H1 (cell line): ENCODE measurements at regions of chr6 and their contacts with region 1.

Region 1: GRCh38 chr6:150004783-150005717 is 20.3 kb downstream of the RAET1L start:
- DNase-seq: peak; percentile 83 to 95
- H3K4me3 ChIP-seq: peak overlapping the region; percentile 69 to 76 (median 72)
- H3K27ac ChIP-seq: no peak overlapping the region; the same call in 1 of the 2 replicates
- H3K4me1 ChIP-seq: peaks cover 0 to 9% (median 4%) of the 10 kb centered on the region in 4 experiments; a peak in 4 of 7 replicates
- H3K27me3 ChIP-seq: peaks cover 16 to 42% (median 34%) of the 10 kb centered on the region in 4 experiments
- CTCF ChIP-seq: 0 out of 4 replicates have a peak, but pooled peaks of 1 of the 3 experiments have one; percentile 4
- EP300 ChIP-seq: no peak
- POLR2A ChIP-seq: peak in 1 of 2 experiments; percentile 82; a peak in 2 of 3 replicates
- RAD21 ChIP-seq: no peak

Region 2: DNA sequence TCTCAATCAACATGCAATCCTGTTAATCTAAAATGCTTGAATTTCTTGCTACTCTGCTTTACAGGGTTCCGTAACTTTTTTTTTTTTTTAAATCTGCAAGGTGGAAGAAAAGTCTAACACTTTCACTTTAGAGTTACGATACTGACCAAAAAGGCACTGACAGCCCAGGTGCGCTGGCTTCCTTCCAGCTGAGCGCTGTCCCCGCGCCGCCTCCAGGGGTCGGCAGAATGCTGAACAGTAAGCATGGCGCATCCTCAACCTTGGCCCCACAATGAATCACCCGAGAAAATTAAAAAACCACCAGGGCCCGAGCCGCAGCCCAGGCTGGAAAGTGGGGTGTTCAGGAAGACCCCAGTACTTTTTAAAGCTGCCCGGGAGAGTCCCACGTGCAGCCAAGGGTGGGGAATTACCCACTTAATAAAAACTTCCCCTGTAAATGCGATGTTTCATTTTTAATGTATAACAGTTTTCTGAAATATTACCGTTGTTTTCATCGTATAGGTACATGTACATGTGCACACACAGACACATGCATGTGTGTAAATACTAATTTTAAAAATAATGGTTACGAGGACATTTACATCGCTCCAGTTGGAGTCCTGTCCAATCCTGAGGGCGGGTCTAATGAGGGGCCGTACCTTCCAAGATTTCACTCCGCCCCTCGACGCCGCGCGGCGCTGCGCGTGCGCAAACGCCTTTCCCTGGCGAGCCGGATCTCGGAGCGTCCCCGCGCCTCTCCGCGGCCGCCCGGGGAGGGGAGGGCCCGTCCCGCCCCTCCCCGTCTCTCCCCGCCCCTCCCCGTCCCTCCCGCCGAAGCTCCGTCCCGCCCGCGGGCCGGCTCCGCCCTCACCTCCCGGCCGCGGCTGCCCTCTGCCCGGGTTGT is 439.3 kb before region 1 on chr6 and contains the start of gene GINM1:
- CTCF ChIA-PET with region 1: no interaction called
- POLR2A ChIA-PET with region 1: no interaction called
- DNase-seq: peak; percentile 80 to 98
- H3K4me3 ChIP-seq: peak within 1 kb of the TSS; percentile 88 to 100 (median 98)
- H3K27ac ChIP-seq: peak within 1 kb of the TSS; percentile 85
- H3K4me1 ChIP-seq: no peaks in the 10 kb centered on the region; a peak in 1 of 7 replicates
- H3K27me3 ChIP-seq: no peaks in the 10 kb centered on the region
- CTCF ChIP-seq: peak; percentile 61 to 81 (median 74)
- EP300 ChIP-seq: no peak
- POLR2A ChIP-seq: no peak; a peak in 1 of 3 replicates
- RAD21 ChIP-seq: peak; percentile 61 to 62
- total RNA-seq, gene GINM1: 21.6 and 24.0 TPM in 2 replicates

Region 3: DNA sequence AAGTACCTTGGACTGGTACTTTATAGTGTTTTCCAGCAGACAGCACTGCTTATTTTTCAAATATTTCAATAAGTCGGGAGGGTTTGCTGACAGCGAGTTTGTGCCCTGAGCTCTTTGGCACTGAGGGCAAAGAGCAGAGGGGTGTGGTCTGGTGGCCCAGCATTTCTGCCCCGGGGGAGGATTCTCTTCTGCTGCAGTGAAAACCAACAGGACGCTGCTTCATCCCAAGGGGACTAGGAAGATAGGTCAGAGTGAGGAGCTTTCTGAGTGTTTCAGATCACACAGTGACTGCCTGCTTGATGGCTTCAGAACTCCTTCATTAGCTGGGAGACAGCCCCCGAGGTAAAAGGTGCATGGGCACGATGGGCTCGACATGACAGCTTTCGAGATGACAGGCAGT is 54.6 kb before region 1 on chr6:
- CTCF ChIA-PET with region 1: interaction called, 15 read pairs
- POLR2A ChIA-PET with region 1: no interaction called
- DNase-seq: peak in 1 of 2 experiments; percentile 31
- H3K4me3 ChIP-seq: no peak overlapping the region
- H3K27ac ChIP-seq: no peak overlapping the region
- H3K4me1 ChIP-seq: peaks cover 0 to 2% (median 0%) of the 10 kb centered on the region in 4 experiments; a peak in 1 of 7 replicates
- H3K27me3 ChIP-seq: peaks cover 13 to 62% (median 38%) of the 10 kb centered on the region in 4 experiments
- CTCF ChIP-seq: no peak
- EP300 ChIP-seq: no peak
- POLR2A ChIP-seq: no peak
- RAD21 ChIP-seq: no peak

Region 4: GRCh38 chr6:149990618-149991471 is 14.2 kb before region 1 on chr6:
- CTCF ChIA-PET with region 1: interaction called, 23 read pairs
- POLR2A ChIA-PET with region 1: no interaction called
- DNase-seq: peak in 1 of 2 experiments; percentile 70
- H3K4me3 ChIP-seq: peak overlapping the region; percentile 0 to 53 (median 29); a peak in 7 of 8 replicates
- H3K27ac ChIP-seq: no peak overlapping the region
- H3K4me1 ChIP-seq: peaks cover 2 to 21% (median 15%) of the 10 kb centered on the region in 4 experiments
- H3K27me3 ChIP-seq: peaks cover 67 to 93% (median 85%) of the 10 kb centered on the region in 4 experiments
- CTCF ChIP-seq: no peak
- EP300 ChIP-seq: no peak
- POLR2A ChIP-seq: no peak
- RAD21 ChIP-seq: no peak